ENCODE measurements at regions of chr6 and their contacts with region 1.

Region 1: DNA sequence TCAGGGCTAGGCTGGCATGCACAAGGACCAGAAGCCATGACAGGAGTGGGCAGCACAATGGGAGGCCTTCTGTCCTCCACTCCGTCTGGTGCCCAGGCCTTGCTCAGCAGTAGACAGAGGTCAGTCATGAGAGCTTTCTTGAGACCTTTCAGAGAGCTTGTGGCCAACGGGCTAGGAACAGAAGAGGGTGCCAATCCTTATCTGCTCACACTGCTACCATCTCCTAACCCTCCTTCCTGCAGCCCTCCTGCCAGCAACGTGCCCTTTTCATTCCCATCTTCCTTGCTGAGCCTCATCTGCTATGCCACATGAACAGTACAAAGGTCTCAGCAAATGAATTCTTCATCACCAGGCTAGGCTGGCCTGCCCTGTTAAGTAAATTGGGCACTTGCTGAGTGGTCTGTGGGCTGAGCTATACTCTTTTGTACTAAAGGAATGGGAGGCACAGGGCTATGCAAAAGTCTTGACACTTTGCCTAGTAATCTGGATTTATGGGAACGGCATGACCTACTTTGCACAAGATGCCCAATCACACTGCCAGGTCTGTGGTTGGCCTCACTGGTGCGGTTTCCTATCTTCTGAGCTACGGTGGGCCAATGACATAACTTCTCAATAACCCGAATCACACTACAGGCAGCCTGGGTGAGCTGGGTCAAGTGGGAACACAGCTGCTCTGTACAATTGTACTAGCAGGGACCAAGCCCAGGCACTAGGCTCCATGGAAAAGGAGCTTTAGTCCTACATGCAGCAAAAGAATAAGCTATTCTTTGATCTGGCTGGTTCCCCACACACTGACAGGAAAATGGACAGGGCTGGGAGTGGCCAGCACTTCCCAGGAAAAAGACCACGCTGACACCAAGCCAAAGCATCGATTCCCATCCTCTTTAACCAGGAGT is 47.8 kb downstream of the ELOVL5 start:
- DNase-seq: peak; percentile 52
- H3K4me3 Mint-ChIP-seq: no peak overlapping the region
- H3K27ac Mint-ChIP-seq: no peak overlapping the region
- H3K4me1 Mint-ChIP-seq: peaks cover 73% of the 10 kb centered on the region
- H3K27me3 Mint-ChIP-seq: no peaks in the 10 kb centered on the region

Region 2: GRCh38 chr6:51562198-51562597 is 1738.7 kb before region 1 on chr6:
- CTCF ChIA-PET with region 1: no interaction called
- POLR2A ChIA-PET with region 1: no interaction called
- DNase-seq: no peak
- H3K4me3 Mint-ChIP-seq: no peak overlapping the region
- H3K27ac Mint-ChIP-seq: no peak overlapping the region
- H3K4me1 Mint-ChIP-seq: no peaks in the 10 kb centered on the region
- H3K27me3 Mint-ChIP-seq: no peaks in the 10 kb centered on the region

Region 3: DNA sequence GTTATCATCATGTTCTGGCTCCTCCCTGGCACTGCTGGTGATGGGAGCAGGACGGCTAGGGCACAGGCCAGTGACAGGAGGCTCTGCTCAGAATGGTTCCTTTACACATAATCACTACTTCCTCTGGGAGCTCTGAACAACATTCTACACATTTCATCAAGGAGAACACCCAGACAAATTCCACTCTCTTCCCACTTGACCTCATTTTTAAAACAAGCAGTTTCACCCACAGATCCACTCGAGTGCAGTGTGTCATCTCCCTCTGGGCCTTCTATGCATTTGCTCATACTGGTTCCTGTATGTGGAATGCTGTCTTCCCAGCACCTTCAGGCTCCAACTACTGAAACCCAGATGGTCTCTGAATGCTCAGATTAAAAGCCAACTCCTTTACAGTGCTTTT is 37.0 kb before region 1 on chr6:
- CTCF ChIA-PET with region 1: no interaction called
- POLR2A ChIA-PET with region 1: no interaction called
- DNase-seq: no peak
- H3K4me3 Mint-ChIP-seq: no peak overlapping the region
- H3K27ac Mint-ChIP-seq: no peak overlapping the region
- H3K4me1 Mint-ChIP-seq: no peaks in the 10 kb centered on the region
- H3K27me3 Mint-ChIP-seq: no peaks in the 10 kb centered on the region

Region 4: GRCh38 chr6:53290537-53291510 is 10.1 kb before region 1 on chr6:
- CTCF ChIA-PET with region 1: interaction called, 4 read pairs
- POLR2A ChIA-PET with region 1: interaction called, 29 read pairs
- DNase-seq: no peak
- H3K4me3 Mint-ChIP-seq: peak overlapping the region; percentile 1
- H3K27ac Mint-ChIP-seq: peak overlapping the region; percentile 63
- H3K4me1 Mint-ChIP-seq: peaks cover 58% of the 10 kb centered on the region
- H3K27me3 Mint-ChIP-seq: no peaks in the 10 kb centered on the region

Region 5: DNA sequence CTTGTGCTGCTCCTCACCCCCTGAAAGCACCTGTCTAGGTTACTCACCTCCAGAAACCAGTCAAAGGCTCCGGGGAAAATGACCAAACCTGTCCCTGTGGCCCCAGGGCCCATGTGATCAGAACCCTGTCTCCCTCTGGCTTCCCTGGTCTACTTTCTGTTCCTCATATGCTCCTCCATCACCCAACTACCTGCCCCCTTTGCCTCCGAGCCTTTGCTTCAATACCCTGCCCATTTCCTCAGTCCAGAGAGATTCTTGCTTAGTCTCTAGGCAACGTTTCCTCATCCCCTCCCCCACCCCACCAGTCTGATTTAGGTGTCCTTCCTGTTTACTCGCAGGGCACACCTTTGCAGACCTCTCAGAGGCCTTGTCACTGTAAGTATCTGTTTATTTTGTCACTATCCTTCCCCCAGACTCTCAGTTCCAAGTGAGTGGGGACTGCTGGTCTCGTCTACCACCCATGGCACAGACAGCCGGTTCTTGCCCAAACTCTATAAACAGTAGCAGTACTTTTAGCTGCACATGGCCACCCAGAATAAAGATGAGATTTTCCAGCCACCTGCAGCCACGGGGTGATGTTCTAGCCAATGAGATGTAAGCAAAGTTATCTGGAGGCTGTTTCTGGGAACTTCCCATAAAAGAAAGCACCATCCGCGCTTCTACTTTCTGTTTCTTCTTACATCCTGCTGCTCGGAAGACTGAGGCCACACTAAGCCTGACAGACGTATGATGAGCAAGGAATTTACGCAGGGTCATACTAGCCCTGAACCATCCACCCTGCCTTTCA is 34.5 kb after region 1 on chr6:
- CTCF ChIA-PET with region 1: no interaction called
- POLR2A ChIA-PET with region 1: interaction called, 15 read pairs
- DNase-seq: peak; percentile 73
- H3K4me3 Mint-ChIP-seq: peak overlapping the region; percentile 76
- H3K27ac Mint-ChIP-seq: peak overlapping the region; percentile 95
- H3K4me1 Mint-ChIP-seq: peaks cover 86% of the 10 kb centered on the region
- H3K27me3 Mint-ChIP-seq: no peaks in the 10 kb centered on the region

Region 6: GRCh38 chr6:53342217-53342616 is 41.3 kb after region 1 on chr6:
- CTCF ChIA-PET with region 1: interaction called, 4 read pairs
- POLR2A ChIA-PET with region 1: interaction called, 46 read pairs
- DNase-seq: no peak
- H3K4me3 Mint-ChIP-seq: no peak overlapping the region
- H3K27ac Mint-ChIP-seq: no peak overlapping the region
- H3K4me1 Mint-ChIP-seq: peaks cover 92% of the 10 kb centered on the region
- H3K27me3 Mint-ChIP-seq: no peaks in the 10 kb centered on the region

Region 7: DNA sequence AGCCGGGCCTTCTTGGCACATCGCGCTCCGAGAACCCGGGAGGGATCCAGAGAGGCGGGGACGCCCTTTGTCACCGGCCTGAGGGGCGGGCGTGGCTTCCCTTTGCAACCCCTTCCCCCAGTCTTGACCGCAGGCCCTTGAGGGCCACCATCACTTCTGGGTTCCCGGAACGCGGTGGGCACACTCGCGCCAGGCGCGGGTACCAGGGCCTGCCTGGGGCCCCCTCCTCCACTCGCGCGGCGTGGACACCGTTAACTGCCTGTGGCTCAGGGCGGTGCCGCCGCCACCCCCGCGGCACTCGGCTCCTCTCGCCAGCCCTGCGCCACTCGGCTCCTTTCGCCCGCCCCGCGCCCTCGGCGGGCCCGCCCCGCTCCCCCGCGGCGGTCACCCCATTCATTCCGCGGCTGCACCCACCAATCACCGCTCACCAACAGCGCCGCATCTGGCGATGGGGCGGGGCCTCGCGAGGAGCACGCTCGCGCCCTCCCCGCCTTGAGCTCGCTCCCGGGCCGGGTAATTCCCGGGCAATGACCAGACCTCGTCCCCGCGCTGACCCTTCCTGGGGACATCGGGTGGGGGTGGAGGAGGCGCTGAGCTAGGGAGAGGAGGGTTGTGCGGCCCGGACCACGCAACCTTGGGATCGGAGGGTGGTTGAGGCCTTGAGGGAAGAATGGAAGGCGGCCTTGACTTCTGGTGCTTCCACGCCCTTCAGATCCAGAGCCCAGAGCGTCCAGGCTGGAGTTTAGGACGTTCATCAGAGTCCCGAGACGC is 58.4 kb after region 1 on chr6:
- CTCF ChIA-PET with region 1: no interaction called
- POLR2A ChIA-PET with region 1: interaction called, 15 read pairs
- DNase-seq: peak; percentile 95
- H3K4me3 Mint-ChIP-seq: peak overlapping the region; percentile 87
- H3K27ac Mint-ChIP-seq: peak overlapping the region; percentile 97
- H3K4me1 Mint-ChIP-seq: peaks cover 48% of the 10 kb centered on the region
- H3K27me3 Mint-ChIP-seq: peaks cover 3% of the 10 kb centered on the region